MCF 10A (cell line): ENCODE measurements at regions of chr3 and their contacts with region 1.

Region 1: GRCh38 chr3:107574650-107575049 is 51.9 kb downstream of the BBX start:
- DNase-seq: peak; percentile 56
- H3K4me3 Mint-ChIP-seq: no peak overlapping the region
- H3K27ac Mint-ChIP-seq: no peak overlapping the region
- H3K4me1 Mint-ChIP-seq: no peaks in the 10 kb centered on the region
- H3K27me3 Mint-ChIP-seq: no peaks in the 10 kb centered on the region
- CTCF ChIP-seq: peak; percentile 64

Region 2: GRCh38 chr3:107429320-107430181 is 145.1 kb before region 1 on chr3:
- CTCF ChIA-PET with region 1: interaction called, 4 read pairs
- POLR2A ChIA-PET with region 1: no interaction called
- intact Hi-C with region 1: loop called (anchors 5 kb)
- DNase-seq: peak; percentile 82
- H3K4me3 Mint-ChIP-seq: peak overlapping the region; percentile 79
- H3K27ac Mint-ChIP-seq: no peak overlapping the region
- H3K4me1 Mint-ChIP-seq: peaks cover 7% of the 10 kb centered on the region
- H3K27me3 Mint-ChIP-seq: no peaks in the 10 kb centered on the region
- CTCF ChIP-seq: peak; percentile 79

Region 3: GRCh38 chr3:107562969-107563529 is 11.6 kb before region 1 on chr3:
- CTCF ChIA-PET with region 1: interaction called, 20 read pairs
- POLR2A ChIA-PET with region 1: no interaction called
- intact Hi-C with region 1: no loop called
- DNase-seq: no peak
- H3K4me3 Mint-ChIP-seq: no peak overlapping the region
- H3K27ac Mint-ChIP-seq: no peak overlapping the region
- H3K4me1 Mint-ChIP-seq: peaks cover 4% of the 10 kb centered on the region
- H3K27me3 Mint-ChIP-seq: no peaks in the 10 kb centered on the region
- CTCF ChIP-seq: no peak

Region 4: GRCh38 chr3:107660306-107660976 is 85.8 kb after region 1 on chr3:
- CTCF ChIA-PET with region 1: interaction called, 5 read pairs
- POLR2A ChIA-PET with region 1: no interaction called
- intact Hi-C with region 1: loop called (anchors 10 kb)
- DNase-seq: peak; percentile 54
- H3K4me3 Mint-ChIP-seq: no peak overlapping the region
- H3K27ac Mint-ChIP-seq: no peak overlapping the region
- H3K4me1 Mint-ChIP-seq: peaks cover 29% of the 10 kb centered on the region
- H3K27me3 Mint-ChIP-seq: no peaks in the 10 kb centered on the region
- CTCF ChIP-seq: peak; percentile 53

Region 5: DNA sequence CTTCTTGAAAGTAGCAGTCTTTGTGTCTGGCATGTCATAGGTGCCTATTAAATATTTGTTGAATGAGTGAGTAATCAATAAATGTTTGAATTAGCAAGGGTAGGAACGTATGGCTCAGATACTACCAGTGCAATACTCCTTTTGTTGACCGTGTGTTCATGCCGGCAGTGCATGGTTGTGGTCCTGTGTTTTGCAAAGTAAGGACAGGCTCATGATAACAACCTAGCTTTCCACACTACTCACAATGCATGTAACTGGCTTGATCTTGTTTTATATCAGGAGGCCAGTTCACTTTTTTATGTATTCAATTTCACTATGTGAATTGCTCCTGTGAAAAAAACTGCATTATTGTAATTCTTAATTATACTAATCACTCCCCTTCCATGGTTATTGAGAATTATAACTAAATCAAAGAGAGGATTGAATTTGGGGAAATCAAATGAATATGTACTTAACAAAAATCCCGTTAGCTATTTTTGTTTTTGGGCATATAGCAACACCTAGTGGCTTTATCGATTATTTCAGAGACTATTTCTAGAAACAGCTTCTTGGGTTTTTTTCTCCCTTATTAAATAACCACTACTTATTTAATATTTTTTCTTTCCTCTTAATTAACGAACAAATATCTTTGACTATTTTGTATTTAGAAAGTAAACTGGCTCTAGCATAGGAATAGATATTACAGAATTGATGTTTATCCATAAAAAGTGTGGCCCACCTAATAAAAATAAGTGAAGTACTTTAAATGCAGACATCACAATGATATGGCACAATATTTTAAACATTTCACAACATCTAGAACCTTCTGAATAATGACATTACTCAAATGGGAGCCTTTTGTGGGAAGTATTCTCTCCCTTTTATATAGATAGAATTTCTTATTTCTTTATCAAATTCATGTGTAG is 166.6 kb after region 1 on chr3:
- CTCF ChIA-PET with region 1: interaction called, 5 read pairs
- POLR2A ChIA-PET with region 1: no interaction called
- intact Hi-C with region 1: loop called (anchors 2 kb)
- DNase-seq: peak; percentile 32
- H3K4me3 Mint-ChIP-seq: no peak overlapping the region
- H3K27ac Mint-ChIP-seq: no peak overlapping the region
- H3K4me1 Mint-ChIP-seq: no peaks in the 10 kb centered on the region
- H3K27me3 Mint-ChIP-seq: no peaks in the 10 kb centered on the region
- CTCF ChIP-seq: peak; percentile 38

Region 6: GRCh38 chr3:107927361-107928083 is 352.9 kb after region 1 on chr3:
- CTCF ChIA-PET with region 1: no interaction called
- POLR2A ChIA-PET with region 1: no interaction called
- intact Hi-C with region 1: loop called (anchors 10 kb)
- DNase-seq: peak; percentile 62
- H3K4me3 Mint-ChIP-seq: peak overlapping the region; percentile 71
- H3K27ac Mint-ChIP-seq: no peak overlapping the region
- H3K4me1 Mint-ChIP-seq: no peaks in the 10 kb centered on the region
- H3K27me3 Mint-ChIP-seq: no peaks in the 10 kb centered on the region
- CTCF ChIP-seq: peak; percentile 80